Dorsolateral prefrontal cortex (tissue), 120 donors: ENCODE measurements at regions of chr16 and their contacts with region 1.

Region 1: DNA sequence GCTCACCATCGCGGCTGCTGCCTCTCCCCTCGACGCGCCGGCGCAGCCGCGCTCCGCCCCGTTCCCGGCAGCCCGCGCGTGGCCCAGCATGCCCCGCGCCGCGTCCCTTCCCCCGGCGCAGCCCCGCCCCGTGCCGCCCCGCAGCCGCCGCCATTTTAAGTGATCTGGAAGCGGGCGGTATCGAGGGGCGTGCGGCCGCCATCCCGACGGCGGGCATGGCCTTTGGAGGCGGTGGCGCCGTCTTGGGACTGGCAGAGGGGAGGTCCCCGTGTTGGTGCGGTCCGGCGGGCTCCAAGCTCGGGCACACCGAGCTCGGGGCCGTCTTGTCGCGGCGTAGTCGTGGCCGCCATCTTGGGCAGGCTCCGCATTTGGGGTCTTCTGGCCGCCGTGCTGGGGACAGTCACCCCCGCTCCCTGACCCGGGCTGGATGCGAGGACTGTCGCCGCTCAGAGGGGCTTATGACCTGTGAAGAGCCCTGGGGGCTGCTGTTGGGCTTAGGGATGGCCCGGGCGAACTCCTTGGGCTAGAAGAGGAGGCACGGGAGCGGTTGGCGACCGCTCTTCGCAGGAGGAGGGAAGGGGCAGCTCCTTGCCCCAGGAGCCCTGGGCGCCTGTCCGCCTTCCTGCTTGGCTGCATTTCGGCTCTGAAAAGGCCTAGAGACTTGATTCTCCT is at the start of gene ELOB:
- DNase-seq: peak; percentile 64 to 89 (median 78)
- H3K4me3 ChIP-seq: peak within 1 kb of the TSS; percentile 76 to 100 (median 96)
- H3K27ac ChIP-seq: peak within 1 kb of the TSS; percentile 93 to 100 (median 100)
- H3K27me3 ChIP-seq: no peaks in the 10 kb centered on the region
- CTCF ChIP-seq: peak in 8 of 56 donors; percentile 12 to 33 (median 20)
- total RNA-seq, gene ELOB: 150 to 306 (median 223) TPM

Region 2: DNA sequence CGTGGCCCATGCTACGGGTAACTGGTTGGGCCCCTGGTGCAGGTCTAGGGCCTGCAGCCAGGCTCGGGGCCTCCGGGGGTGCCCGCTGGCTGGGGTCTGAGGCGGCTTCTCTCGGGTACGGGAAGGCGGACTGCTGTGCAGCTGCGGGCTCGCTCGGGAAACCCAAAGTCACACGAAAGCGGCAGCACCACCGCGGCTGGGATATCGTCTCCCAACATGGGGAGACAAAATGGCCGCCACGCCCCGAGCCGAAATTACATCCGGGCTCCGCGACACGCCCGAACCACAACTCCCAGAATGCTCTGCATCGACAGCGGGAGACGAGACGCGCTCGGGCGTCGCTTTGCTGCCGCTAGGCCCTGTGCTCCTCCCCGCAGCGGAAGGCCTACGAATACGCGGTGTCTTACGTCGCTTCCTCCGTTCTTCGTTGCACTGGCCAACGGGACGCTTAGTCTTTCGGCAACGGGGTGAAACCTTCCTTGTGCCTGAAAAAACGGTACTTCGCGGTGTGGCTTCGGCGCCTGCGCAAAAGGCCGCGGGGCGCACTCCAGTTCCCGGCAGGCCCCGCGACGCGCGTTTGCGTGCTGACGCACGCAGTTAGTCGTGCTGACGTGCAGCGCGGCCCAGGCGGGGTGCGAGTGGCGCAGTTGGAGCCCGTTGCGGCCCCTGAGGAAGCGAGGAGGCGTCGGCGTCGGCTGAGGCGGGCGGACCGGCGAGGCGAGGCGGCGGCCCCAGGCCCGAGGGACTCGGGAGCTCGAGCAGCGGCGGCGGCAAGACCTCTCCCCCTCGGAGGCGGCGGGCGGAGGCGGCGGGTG is 25.1 kb before region 1 on chr16 and contains the start of gene SRRM2:
- intact Hi-C with region 1: loop called (anchors 1 kb)
- DNase-seq: peak; percentile 86 to 94 (median 90)
- H3K4me3 ChIP-seq: peak within 1 kb of the TSS; percentile 65 to 99 (median 94)
- H3K27ac ChIP-seq: peak within 1 kb of the TSS; percentile 97 to 100 (median 100)
- H3K27me3 ChIP-seq: no peaks in the 10 kb centered on the region
- CTCF ChIP-seq: peak in 21 of 56 donors; percentile 4 to 47 (median 16)
- total RNA-seq, gene SRRM2: 369 to 792 (median 531) TPM

Region 3: GRCh38 chr16:2911580-2912329 is 134.4 kb after region 1 on chr16 and contains the start of gene FLYWCH1:
- intact Hi-C with region 1: loop called in 1 of 2 experiments (anchors 10 kb)
- DNase-seq: peak; percentile 97 to 99 (median 98)
- H3K4me3 ChIP-seq: peak within 1 kb of the TSS; percentile 67 to 96 (median 86)
- H3K27ac ChIP-seq: peak within 1 kb of the TSS; percentile 17 to 94 (median 87)
- H3K27me3 ChIP-seq: no peaks in the 10 kb centered on the region
- CTCF ChIP-seq: peak in 41 of 56 donors; percentile 3 to 67 (median 33)
- total RNA-seq, gene FLYWCH1: 55.0 to 127 (median 86.7) TPM

Region 4: DNA sequence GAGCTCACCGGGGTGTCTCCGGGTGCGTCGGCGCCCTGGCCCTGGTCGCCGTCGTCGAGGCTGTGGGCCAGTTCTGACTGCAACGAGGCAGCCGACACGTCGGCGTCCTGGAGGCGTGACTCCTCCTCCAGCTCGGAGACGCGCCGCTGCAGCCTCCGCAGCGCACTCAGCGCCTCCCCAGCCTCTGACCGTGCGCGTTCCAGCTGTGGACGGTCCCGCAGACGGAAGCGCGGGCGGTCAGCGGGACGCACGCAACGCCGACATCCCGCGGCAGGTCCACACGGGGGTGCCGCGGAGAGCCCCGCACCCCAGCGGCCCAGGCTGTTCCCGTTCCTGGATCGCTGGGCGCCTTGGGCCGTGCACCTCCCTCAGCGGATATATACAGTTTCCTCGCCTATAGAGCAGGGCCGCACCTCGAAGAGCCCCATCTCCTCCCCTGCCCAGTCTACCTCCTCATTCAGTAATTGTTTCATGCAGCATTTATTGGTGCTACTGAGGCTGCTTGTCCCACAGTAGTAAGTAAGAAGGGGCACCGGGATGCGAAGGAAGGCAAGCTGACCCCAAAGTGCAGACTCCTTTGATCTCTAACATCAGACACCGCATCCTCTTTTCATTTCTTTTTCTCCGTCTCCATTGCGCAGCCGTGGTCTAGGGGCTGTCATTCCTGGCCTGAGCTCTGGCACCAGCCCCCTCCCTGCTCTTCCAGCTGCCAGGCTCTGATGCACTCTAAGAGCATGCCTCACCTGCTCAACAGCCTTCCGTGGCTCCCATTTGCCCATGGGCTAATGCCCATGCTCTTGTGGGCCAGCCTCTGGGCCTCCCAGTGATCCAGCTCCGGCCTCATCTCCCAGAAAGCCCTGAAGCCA is 252.4 kb after region 1 on chr16:
- intact Hi-C with region 1: no loop called
- DNase-seq: peak in 1 of 10 donors; percentile 41
- H3K4me3 ChIP-seq: peak overlapping the region in 15 of 59 donors; percentile 9 to 39 (median 21)
- H3K27ac ChIP-seq: no peak overlapping the region
- H3K27me3 ChIP-seq: peaks cover 0 to 62% (median 32%) of the 10 kb centered on the region in 45 donors
- CTCF ChIP-seq: no peak